Caco-2 (cell line): ENCODE measurements at regions of chr19 and their contacts with region 1.

Region 1: GRCh38 chr19:48993175-48994034 is at the starts of genes GYS1 and RUVBL2:
- DNase-seq: peak; percentile 100
- H3K4me3 ChIP-seq: peak within 1 kb of the TSS; percentile 77
- H3K4me3 Mint-ChIP-seq: peak within 1 kb of the TSS; percentile 99
- H3K27ac Mint-ChIP-seq: peak within 1 kb of the TSS; percentile 97
- H3K4me1 ChIP-seq: peaks cover 13% of the 10 kb centered on the region; the same call in 1 of the 2 replicates
- H3K4me1 Mint-ChIP-seq: peaks cover 25% of the 10 kb centered on the region
- H3K27me3 ChIP-seq: no peaks in the 10 kb centered on the region
- H3K27me3 Mint-ChIP-seq: no peaks in the 10 kb centered on the region
- CTCF ChIP-seq: peak; percentile 98 to 99
- total RNA-seq, gene GYS1: 62.7 and 65.3 TPM in 2 replicates
- total RNA-seq, gene RUVBL2: 165 and 172 TPM in 2 replicates

Region 2: GRCh38 chr19:48842789-48843162 is 150.6 kb before region 1 on chr19:
- CTCF ChIA-PET with region 1: interaction called, 17 read pairs
- POLR2A ChIA-PET with region 1: interaction called, 12 read pairs
- intact Hi-C with region 1: no loop called
- DNase-seq: peak; percentile 67 to 76
- H3K4me3 ChIP-seq: no peak overlapping the region
- H3K4me3 Mint-ChIP-seq: no peak overlapping the region
- H3K27ac Mint-ChIP-seq: peak overlapping the region; percentile 14
- H3K4me1 ChIP-seq: peaks cover 4% of the 10 kb centered on the region; the same call in 1 of the 2 replicates
- H3K4me1 Mint-ChIP-seq: peaks cover 7% of the 10 kb centered on the region
- H3K27me3 ChIP-seq: no peaks in the 10 kb centered on the region
- H3K27me3 Mint-ChIP-seq: no peaks in the 10 kb centered on the region
- CTCF ChIP-seq: peak; percentile 86 to 94

Region 3: DNA sequence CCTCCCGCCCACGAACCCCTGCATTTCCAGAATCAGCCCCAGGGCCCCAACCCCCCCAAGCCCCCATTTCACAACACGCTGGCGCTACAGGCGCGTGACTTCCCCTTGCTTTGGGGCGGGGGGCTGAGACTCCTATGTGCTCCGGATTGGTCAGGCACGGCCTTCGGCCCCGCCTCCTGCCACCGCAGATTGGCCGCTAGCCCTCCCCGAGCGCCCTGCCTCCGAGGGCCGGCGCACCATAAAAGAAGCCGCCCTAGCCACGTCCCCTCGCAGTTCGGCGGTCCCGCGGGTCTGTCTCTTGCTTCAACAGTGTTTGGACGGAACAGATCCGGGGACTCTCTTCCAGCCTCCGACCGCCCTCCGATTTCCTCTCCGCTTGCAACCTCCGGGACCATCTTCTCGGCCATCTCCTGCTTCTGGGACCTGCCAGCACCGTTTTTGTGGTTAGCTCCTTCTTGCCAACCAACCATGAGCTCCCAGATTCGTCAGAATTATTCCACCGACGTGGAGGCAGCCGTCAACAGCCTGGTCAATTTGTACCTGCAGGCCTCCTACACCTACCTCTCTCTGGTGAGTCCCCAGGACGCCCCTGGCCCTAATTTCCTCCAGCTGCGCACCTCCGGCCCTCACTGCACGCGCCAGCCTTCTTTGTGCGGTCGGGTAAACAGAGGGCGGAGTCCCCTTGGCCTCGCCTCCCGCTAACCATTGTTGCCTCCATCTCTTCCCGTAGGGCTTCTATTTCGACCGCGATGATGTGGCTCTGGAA is 28.2 kb before region 1 on chr19 and contains the start of gene FTL:
- CTCF ChIA-PET with region 1: interaction called, 18 read pairs
- POLR2A ChIA-PET with region 1: interaction called, 16 read pairs
- intact Hi-C with region 1: loop called (anchors 2 kb)
- DNase-seq: peak; percentile 99
- H3K4me3 ChIP-seq: peak within 1 kb of the TSS; percentile 95
- H3K4me3 Mint-ChIP-seq: peak within 1 kb of the TSS; percentile 96
- H3K27ac Mint-ChIP-seq: peak within 1 kb of the TSS; percentile 96
- H3K4me1 ChIP-seq: peaks cover 31% of the 10 kb centered on the region
- H3K4me1 Mint-ChIP-seq: peaks cover 40% of the 10 kb centered on the region
- H3K27me3 ChIP-seq: no peaks in the 10 kb centered on the region
- H3K27me3 Mint-ChIP-seq: no peaks in the 10 kb centered on the region
- CTCF ChIP-seq: no peak
- total RNA-seq, gene FTL: 2,542 and 2,963 TPM in 2 replicates

Region 4: GRCh38 chr19:48982280-48982679 is 11.1 kb before region 1 on chr19:
- CTCF ChIA-PET with region 1: interaction called, 24 read pairs
- POLR2A ChIA-PET with region 1: interaction called, 14 read pairs
- intact Hi-C with region 1: no loop called
- DNase-seq: no peak
- H3K4me3 ChIP-seq: no peak overlapping the region
- H3K4me3 Mint-ChIP-seq: no peak overlapping the region
- H3K27ac Mint-ChIP-seq: no peak overlapping the region
- H3K4me1 ChIP-seq: no peaks in the 10 kb centered on the region
- H3K4me1 Mint-ChIP-seq: no peaks in the 10 kb centered on the region
- H3K27me3 ChIP-seq: no peaks in the 10 kb centered on the region
- H3K27me3 Mint-ChIP-seq: no peaks in the 10 kb centered on the region
- CTCF ChIP-seq: no peak

Region 5: GRCh38 chr19:49073514-49074378 is 80.3 kb after region 1 on chr19:
- CTCF ChIA-PET with region 1: interaction called, 10 read pairs
- POLR2A ChIA-PET with region 1: no interaction called
- intact Hi-C with region 1: loop called (anchors 5 kb)
- DNase-seq: peak; percentile 59 to 72
- H3K4me3 ChIP-seq: no peak overlapping the region
- H3K4me3 Mint-ChIP-seq: peak overlapping the region; percentile 78
- H3K27ac Mint-ChIP-seq: peak overlapping the region; percentile 60
- H3K4me1 ChIP-seq: peaks cover 11% of the 10 kb centered on the region
- H3K4me1 Mint-ChIP-seq: peaks cover 17% of the 10 kb centered on the region
- H3K27me3 ChIP-seq: no peaks in the 10 kb centered on the region
- H3K27me3 Mint-ChIP-seq: no peaks in the 10 kb centered on the region
- CTCF ChIP-seq: peak; percentile 44 to 53

Region 6: GRCh38 chr19:49224856-49225255 is 231.5 kb after region 1 on chr19:
- CTCF ChIA-PET with region 1: no interaction called
- POLR2A ChIA-PET with region 1: no interaction called
- intact Hi-C with region 1: loop called (anchors 10 kb)
- DNase-seq: peak; percentile 71 to 72
- H3K4me3 ChIP-seq: no peak overlapping the region
- H3K4me3 Mint-ChIP-seq: no peak overlapping the region
- H3K27ac Mint-ChIP-seq: no peak overlapping the region
- H3K4me1 ChIP-seq: no peaks in the 10 kb centered on the region
- H3K4me1 Mint-ChIP-seq: peaks cover 7% of the 10 kb centered on the region
- H3K27me3 ChIP-seq: no peaks in the 10 kb centered on the region
- H3K27me3 Mint-ChIP-seq: no peaks in the 10 kb centered on the region
- CTCF ChIP-seq: peak in 1 of 2 experiments; percentile 49